Activated CD4-positive, alpha-beta T cell treated with anti-CD3 and anti-CD28 coated beads for 36 hours (primary cell): ENCODE measurements at regions of chr2 and their contacts with region 1.

Region 1: DNA sequence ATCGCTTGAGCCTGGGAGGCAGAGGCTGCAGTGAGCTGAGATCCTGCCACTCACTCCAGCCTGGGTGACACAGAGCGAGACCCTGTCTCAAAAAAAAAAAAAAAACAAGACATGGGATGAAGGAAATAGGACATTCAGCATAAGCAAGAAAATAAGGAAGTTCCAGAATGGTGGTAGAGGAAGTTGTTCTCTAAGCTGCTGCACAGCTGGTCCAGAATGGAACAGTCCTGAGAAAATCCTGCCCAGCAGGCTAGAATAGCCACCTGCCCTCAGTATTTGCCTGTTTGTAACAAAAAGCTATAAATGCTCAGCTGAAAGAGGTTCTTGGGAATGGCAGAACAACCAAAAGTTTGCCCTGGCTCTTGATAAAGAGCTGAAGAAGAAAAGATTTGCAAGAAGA is 11.1 kb upstream of the MAPRE3 start:
- DNase-seq: no peak
- ATAC-seq: no peak
- H3K4me3 Mint-ChIP-seq: no peak overlapping the region
- H3K27ac Mint-ChIP-seq: no peak overlapping the region
- H3K4me1 Mint-ChIP-seq: no peaks in the 10 kb centered on the region
- H3K27me3 Mint-ChIP-seq: peaks cover 27% of the 10 kb centered on the region

Region 2: DNA sequence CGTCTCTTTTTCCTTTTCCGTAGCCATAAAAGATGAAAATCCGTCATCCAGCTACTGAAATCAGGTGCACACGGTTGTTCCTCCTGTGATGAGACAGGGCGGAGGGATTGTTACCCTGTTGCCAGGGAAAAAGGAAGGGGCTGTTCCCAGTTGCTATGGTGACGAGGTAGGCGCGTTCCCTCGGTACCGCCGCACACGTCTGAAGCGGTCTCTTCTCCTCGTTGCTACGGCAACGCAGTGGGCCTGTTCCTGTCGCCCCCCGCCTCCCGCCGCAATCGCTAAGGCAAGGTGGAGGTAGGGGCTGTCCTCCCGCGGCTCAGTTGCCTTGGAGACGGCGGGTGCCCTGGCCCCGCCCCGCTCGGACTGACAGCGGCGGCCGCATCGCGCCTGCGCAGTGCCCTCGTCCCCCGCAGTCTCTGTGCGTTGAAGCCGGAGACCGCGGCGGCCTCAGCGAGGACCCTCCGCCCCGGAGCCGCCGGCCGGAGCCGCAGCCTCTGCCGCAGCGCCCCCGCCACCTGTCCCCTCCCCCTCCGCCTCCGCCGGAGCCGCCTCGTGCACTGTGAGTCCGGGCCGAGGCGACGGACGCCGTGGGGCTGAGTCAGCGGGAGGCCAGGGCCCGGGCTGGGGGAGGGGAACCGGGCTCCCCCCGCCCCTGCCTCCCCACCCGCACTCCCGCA is 11.1 kb after region 1 on chr2 and contains the start of gene MAPRE3:
- CTCF ChIA-PET with region 1: interaction called, 15 read pairs
- POLR2A ChIA-PET with region 1: interaction called, 9 read pairs
- intact Hi-C with region 1: no loop called
- DNase-seq: peak; percentile 86
- ATAC-seq: peak; percentile 93
- H3K4me3 Mint-ChIP-seq: peak within 1 kb of the TSS; percentile 72
- H3K27ac Mint-ChIP-seq: peak within 1 kb of the TSS; percentile 5
- H3K4me1 Mint-ChIP-seq: peaks cover 15% of the 10 kb centered on the region
- H3K27me3 Mint-ChIP-seq: peaks cover 11% of the 10 kb centered on the region
- total RNA-seq, gene MAPRE3: 3.2 to 4.1 TPM

Region 3: DNA sequence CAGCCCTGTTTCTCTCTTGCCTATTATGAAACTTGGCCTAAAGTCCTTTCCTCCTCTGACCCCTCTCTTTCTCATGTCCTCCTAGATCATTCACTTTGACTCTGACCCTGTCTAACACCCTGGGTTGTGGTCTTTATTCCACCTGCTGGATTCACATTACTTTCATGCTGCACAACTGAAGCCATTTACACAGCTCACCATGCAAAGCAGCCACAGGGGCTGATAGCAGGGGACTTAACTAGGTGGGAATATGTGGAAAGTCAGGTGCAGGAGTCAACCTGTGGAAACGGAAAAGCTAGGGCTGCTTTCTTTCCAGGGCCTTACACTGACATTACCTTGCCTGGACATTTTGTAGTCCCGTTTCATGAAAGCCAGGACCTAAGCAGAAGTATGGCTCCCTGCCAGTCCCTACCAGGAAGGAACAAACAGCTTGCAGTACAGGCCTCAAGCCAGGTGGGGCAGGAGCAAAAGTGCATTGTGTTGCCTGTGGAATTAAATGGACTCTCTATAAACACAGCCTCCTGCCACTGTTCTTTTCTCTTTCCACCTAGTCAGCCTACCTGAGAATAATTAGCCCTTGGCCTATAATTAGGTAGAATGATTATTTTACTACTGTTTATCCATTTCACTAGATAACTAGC is 22.9 kb after region 1 on chr2:
- CTCF ChIA-PET with region 1: interaction called, 12 read pairs
- POLR2A ChIA-PET with region 1: no interaction called
- intact Hi-C with region 1: no loop called
- DNase-seq: peak; percentile 42
- ATAC-seq: peak; percentile 57
- H3K4me3 Mint-ChIP-seq: no peak overlapping the region
- H3K27ac Mint-ChIP-seq: no peak overlapping the region
- H3K4me1 Mint-ChIP-seq: no peaks in the 10 kb centered on the region
- H3K27me3 Mint-ChIP-seq: no peaks in the 10 kb centered on the region

Region 4: DNA sequence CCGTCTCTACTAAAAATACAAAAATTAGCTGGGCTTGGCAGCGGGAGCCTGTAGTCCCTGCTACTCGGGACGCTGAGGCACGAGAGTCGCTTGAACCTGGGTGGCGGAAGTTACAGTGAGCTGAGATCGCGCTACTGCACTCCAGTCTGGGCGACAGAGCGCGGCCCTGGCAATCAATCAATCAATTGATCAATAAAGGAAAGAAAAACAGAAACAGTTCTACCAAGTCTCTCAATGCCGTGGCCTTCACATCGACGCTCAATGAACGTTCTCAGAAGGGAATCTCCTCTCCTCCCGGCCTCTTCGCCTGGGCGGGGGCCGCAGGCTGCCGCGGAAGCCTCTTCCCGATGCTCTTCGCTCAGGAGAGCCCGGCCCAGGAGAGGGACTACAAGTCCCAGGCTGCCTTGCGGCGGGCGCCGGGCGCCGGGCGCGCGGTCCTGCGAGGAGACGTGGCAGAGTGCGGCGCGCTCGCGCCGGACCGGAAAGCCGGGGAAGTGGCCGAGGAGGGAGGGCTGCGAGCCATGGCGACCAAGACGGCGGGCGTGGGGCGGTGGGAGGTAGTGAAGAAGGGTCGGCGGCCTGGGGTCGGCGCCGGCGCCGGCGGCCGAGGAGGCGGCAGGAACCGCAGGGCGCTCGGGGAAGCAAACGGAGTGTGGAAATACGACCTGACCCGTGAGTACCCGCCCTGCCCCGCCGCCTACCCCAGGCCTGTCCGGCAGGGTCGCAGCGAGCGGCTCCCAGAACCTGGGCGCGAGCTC is 73.3 kb after region 1 on chr2 and contains the start of gene TMEM214:
- CTCF ChIA-PET with region 1: interaction called, 10 read pairs
- POLR2A ChIA-PET with region 1: no interaction called
- intact Hi-C with region 1: no loop called
- DNase-seq: peak; percentile 89
- ATAC-seq: peak; percentile 96
- H3K4me3 Mint-ChIP-seq: peak within 1 kb of the TSS; percentile 89
- H3K27ac Mint-ChIP-seq: peak within 1 kb of the TSS; percentile 80
- H3K4me1 Mint-ChIP-seq: peaks cover 39% of the 10 kb centered on the region
- H3K27me3 Mint-ChIP-seq: no peaks in the 10 kb centered on the region
- total RNA-seq, gene TMEM214: 54.1 to 69.1 TPM

Region 5: DNA sequence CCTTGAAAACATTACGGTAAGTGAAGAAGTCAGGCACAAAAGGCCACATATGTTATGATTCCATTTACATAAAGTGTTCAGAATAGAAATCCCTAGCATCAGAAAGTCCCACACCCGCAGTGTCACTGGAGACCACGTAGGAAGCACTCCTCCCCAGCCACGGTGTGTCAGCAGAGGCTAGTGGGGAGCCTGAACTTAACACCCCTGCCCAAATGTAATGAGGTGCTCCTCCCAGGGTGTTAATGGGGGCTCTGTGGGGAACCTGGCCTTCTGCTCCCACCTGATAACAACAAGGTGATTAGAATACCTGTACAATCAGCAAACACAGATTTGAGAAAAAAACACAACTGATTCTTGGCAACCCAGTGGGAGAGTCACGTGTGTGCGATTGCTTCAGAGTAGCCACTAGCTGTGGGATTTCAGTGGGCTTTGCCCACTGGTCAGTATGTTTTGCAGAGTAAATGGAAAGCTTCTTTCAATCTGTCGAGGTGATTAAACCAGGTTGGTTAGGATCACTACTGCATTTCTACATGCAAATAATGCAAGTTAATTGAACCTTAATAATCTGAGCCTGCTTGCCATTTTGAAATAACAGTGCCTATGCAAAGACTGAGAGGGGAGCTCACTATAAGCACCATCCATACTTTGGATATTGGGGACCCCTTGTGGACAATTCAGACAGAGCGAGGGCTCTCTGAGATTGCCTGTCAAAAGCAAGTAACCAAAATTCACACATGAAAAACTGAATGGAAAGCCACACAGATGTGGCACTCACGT is 231.9 kb after region 1 on chr2:
- CTCF ChIA-PET with region 1: interaction called, 5 read pairs
- POLR2A ChIA-PET with region 1: no interaction called
- intact Hi-C with region 1: loop called (anchors 2 to 5 kb)
- DNase-seq: peak; percentile 57
- ATAC-seq: peak; percentile 87
- H3K4me3 Mint-ChIP-seq: no peak overlapping the region
- H3K27ac Mint-ChIP-seq: no peak overlapping the region
- H3K4me1 Mint-ChIP-seq: no peaks in the 10 kb centered on the region
- H3K27me3 Mint-ChIP-seq: peaks cover 2% of the 10 kb centered on the region

Region 6: GRCh38 chr2:27262379-27263286 is 303.3 kb after region 1 on chr2 and contains the start of gene SLC30A3:
- CTCF ChIA-PET with region 1: no interaction called
- POLR2A ChIA-PET with region 1: no interaction called
- intact Hi-C with region 1: no loop called
- DNase-seq: peak; percentile 85
- ATAC-seq: peak; percentile 75
- H3K4me3 Mint-ChIP-seq: peak within 1 kb of the TSS; percentile 71
- H3K27ac Mint-ChIP-seq: peak within 1 kb of the TSS; percentile 52
- H3K4me1 Mint-ChIP-seq: peaks cover 23% of the 10 kb centered on the region
- H3K27me3 Mint-ChIP-seq: peaks cover 49% of the 10 kb centered on the region
- total RNA-seq, gene SLC30A3: 0.53 to 0.86 TPM

Region 7: DNA sequence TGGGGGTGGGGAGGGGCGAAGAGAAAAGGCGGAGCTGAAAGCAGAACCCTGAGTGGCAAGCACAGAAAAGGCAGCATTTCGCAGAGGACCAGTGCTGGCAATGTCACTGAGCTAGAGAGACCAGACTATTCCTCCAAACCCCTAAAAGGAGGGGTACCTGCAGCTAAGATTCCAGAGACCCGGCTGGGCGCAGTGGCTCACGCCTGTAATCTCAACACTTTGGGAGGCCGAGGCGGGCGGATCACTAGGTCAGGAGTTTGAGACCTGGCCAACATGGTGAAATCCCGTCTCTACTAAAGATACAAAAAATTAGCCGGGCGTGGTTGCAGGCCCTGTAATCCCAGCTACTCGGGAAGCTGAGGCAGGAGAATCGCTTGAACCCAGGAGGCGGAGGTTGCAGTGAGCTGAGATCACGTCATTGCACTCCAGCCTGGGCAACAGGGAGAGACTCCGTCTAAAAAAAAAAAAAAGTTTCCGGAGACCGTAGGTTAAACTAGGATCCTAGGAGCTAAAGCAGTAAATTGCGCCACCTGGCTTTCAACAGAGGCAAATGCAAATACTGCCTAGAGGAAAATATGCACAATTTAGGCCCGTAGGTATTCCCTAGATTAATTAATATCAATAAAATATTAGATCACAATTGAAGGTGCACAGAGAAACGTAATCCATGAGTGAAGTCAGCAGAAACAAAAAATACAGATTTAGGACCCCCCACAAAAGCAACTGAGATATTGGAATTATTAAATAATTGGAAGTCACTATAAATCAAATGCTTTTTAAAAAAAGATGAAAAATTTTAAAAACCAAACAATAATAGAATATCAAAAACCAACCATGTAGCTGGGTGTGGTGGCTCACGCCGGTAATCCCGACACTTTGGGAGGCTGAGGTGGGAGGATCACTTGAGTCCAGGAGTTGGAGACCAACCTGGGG is 344.0 kb after region 1 on chr2:
- CTCF ChIA-PET with region 1: interaction called, 8 read pairs
- POLR2A ChIA-PET with region 1: no interaction called
- intact Hi-C with region 1: loop called (anchors 1 to 5 kb)
- DNase-seq: peak; percentile 67
- ATAC-seq: peak; percentile 78
- H3K4me3 Mint-ChIP-seq: peak overlapping the region; percentile 56
- H3K27ac Mint-ChIP-seq: peak overlapping the region; percentile 24
- H3K4me1 Mint-ChIP-seq: peaks cover 5% of the 10 kb centered on the region
- H3K27me3 Mint-ChIP-seq: peaks cover 10% of the 10 kb centered on the region